ENCODE measurements at regions of chr11 and their contacts with region 1.

Region 1: GRCh38 chr11:74634537-74634936 is 42.2 kb downstream of the POLD3 start:
- DNase-seq: peak in 2 of 6 donors; percentile 19 to 33
- ATAC-seq: peak; percentile 49 to 92 (median 88)
- H3K4me3 ChIP-seq: no peak overlapping the region
- H3K27ac ChIP-seq: no peak overlapping the region
- H3K4me1 ChIP-seq: peaks cover 0 to 3% (median 0%) of the 10 kb centered on the region in 3 donors
- H3K27me3 ChIP-seq: no peaks in the 10 kb centered on the region
- CTCF ChIP-seq: peak in 2 of 4 donors; percentile 18 to 22

Region 2: DNA sequence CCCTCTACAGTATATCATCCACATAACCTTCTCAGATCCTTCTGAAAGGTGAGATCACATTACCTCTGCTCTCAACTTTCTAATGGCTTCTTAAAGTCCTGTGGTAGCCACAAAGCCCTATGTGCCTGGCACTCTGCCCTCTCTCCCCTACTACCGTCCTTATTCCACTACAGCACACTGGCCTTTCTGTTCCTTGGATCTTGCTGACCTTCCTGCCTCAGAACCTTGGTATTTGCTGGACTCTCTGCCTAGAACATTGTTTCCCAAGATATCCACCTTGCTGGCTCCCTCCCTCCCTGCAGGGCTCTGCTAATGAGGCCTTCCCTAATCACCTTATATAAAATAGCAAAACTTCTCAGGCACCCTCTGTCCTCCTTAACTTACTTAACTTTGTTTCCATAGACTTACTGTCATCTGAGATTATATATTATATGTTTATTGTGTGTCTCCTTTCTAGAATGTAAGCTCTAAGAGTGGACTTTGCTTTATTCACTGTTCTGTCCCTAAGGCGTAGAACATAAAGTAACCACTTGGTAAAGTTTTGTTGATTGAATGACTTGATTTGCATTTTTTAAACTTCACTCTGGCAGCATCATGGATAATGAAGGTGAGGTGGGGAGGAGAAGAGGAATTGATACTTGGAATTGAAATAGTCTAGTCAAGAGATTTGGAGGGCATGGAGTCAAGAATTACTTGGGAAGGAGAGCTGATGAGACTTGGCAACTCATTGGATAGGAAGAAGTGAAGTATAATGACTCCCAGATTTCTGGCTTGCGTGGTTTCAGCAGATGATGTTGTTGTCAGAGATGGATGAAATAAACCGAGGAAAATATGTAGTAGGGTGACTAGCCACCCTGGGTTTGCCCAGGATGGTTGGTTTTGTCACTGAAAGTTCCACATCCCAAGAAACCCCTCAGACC is 31.6 kb before region 1 on chr11:
- intact Hi-C with region 1: no loop called
- DNase-seq: no peak
- ATAC-seq: no peak
- H3K4me3 ChIP-seq: no peak overlapping the region
- H3K27ac ChIP-seq: no peak overlapping the region
- H3K4me1 ChIP-seq: peaks cover 0 to 7% (median 4%) of the 10 kb centered on the region in 3 donors
- H3K27me3 ChIP-seq: no peaks in the 10 kb centered on the region
- CTCF ChIP-seq: no peak

Region 3: DNA sequence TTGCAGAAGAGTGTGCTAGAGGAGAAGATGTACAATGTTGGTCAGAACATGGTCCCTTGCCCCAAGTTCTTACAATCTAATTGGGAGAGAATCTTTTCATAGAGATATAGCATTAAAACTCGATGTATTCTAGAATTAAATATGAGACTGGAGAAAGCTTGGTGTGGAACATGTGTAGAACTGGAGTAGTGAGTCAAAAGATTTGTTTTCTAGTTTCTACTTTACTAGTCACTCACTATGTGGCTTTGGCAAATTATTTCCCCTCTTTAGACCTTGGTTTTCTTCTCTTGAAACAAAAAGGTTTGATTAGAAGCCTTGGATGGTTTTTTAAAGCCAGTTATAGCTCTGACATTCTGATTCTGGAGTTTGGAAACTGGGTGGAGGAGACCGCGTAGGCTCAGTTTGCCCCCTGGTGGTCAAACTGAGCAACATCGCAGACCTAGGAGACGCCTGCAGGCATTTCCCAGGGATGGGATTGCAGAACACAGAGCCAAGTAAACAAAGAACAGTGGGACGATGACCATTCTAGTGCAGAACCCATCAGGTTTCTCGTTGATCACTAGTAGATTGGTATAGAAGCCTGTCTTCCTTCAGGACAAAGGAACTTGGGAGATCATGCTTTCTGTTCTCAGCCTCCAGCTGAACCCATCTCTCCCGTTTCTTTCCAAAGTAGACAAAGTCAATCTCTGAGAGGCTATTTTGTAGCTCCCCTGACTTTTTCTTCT is 105.2 kb after region 1 on chr11:
- intact Hi-C with region 1: loop called in 1 of 3 experiments (anchors 10 kb)
- DNase-seq: peak in 4 of 6 donors; percentile 29 to 70 (median 58)
- ATAC-seq: peak; percentile 83 to 98 (median 97)
- H3K4me3 ChIP-seq: no peak overlapping the region
- H3K27ac ChIP-seq: no peak overlapping the region
- H3K4me1 ChIP-seq: no peaks in the 10 kb centered on the region
- H3K27me3 ChIP-seq: no peaks in the 10 kb centered on the region
- CTCF ChIP-seq: peak; percentile 77 to 93 (median 88)

Region 4: GRCh38 chr11:74849525-74850391 is 215.2 kb after region 1 on chr11:
- intact Hi-C with region 1: no loop called
- DNase-seq: no peak
- ATAC-seq: no peak
- H3K4me3 ChIP-seq: no peak overlapping the region
- H3K27ac ChIP-seq: no peak overlapping the region
- H3K4me1 ChIP-seq: no peaks in the 10 kb centered on the region
- H3K27me3 ChIP-seq: no peaks in the 10 kb centered on the region
- CTCF ChIP-seq: no peak